PC-3 (cell line): ENCODE measurements at regions of chr10 and their contacts with region 1.

Region 1: DNA sequence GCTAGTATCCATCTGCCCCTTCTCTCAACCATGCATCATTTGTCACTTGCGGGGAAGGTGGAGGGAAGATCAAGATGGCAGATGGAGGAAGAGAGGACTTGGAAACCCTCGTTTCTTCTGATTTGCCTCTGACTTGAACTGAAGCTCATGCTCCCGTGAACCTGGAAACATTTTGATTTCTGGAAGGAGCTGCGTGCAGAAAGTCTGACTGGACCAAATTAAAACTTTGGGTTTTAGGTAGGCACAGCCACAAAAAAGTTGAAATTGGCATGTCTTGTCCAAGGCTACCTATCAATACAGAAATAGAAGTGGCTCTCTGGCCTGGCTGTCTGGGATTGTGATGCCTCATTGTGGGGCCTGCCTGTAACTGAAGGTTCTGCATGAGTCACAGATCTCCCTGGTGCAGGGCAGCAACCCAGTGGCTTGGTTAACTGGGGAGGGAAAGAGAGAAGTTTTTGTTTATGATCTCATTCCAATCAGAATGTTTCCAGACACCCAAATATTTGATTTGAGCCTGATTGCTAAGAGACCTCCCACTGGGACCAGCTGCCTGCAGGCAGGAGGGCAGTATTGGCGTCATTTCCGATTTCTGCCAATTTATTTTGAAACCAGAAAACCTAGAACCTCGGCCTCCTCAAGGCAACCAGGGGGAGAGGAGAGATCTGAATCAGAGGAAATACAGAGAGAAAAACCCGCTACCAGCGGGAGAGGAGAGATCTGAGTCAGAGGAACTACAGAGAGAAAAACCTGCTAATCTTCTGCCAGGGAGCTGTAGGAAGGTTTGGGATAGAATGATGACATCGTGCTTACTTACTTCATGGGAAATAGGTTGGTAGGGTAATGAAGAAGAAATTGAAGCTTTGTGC is 363.6 kb downstream of the ANKRD30A start:
- DNase-seq: peak; percentile 99
- ATAC-seq: peak; percentile 92
- H3K4me3 ChIP-seq: peak overlapping the region; percentile 36
- H3K27ac ChIP-seq: peak overlapping the region; percentile 87
- H3K4me1 ChIP-seq: peaks cover 23% of the 10 kb centered on the region
- H3K27me3 ChIP-seq: no peaks in the 10 kb centered on the region
- CTCF ChIP-seq: peak; percentile 50; the same call in 1 of the 2 replicates

Region 2: DNA sequence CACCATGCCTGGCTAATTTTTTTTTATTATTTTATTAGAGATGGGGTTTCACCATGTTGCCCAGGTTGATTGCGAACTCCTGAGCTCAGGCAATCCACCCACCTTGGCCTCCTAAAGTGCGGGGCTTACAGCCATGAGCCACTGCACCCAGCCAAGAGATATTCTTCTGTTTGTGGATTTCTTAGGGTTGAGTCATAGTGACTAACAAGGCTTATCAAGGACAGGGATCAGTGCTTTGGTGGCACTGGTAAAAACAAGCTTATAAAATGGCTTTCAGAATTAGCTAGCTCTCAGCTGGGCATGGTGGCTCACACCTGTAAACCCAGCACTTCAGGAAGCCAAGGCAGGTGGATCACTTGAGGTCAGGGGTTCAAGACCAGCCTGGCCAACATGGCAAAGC is 246.0 kb after region 1 on chr10:
- CTCF ChIA-PET with region 1: no interaction called
- POLR2A ChIA-PET with region 1: no interaction called
- intact Hi-C with region 1: loop called (anchors 1 kb)
- DNase-seq: peak; percentile 100
- ATAC-seq: peak; percentile 72
- H3K4me3 ChIP-seq: no peak overlapping the region
- H3K27ac ChIP-seq: peak overlapping the region; percentile 7; the same call in 1 of the 2 replicates
- H3K4me1 ChIP-seq: peaks cover 42% of the 10 kb centered on the region
- H3K27me3 ChIP-seq: no peaks in the 10 kb centered on the region
- CTCF ChIP-seq: no peak